ENCODE measurements at regions of chr21 and their contacts with region 1.

Region 1: DNA sequence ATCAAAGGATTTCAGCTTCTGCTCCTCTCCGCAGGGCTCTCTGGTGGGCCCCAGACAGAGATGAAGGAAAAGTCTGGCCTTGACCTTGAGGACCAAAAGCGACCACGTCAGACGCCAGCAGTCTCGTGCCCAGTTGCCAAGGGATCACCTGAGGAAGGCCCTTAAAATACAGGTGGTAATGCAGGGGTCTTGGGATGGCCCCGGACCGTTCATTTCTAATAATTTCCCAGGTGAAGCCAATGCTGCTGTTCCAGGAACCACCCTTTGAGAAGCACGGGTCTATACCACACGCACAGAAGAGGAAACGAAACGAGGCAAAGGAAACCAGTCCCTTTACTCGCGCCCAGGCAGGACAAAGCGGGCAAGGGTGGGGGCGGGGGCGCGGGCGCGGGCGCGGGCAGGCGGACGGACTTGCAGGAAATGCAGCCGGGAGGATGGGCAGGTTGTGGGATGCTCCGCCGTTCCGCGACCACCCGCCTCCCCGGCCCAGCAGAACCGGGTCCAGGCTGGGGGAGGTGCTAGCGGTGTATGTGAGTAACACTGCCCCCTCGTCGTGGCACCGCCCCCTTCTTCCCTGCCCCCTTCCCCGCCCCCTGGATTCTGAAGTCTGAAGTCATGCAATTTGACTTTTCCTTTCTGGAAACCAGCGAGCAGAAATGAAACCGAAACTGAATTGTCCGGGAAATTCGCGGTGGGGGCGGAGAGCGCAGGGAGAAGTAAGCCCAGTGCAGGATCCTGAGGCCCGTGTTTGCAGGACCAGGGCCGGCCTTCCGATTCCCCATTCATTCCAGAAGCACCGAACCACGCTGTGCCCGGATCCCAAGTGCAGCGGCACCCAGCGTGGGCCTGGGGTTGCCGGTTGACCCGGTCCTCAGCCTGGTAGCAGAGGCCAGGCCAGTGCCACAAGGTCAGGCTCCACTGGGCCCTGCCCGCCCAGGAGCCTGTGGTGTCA is 5.9 kb upstream of the MX1 start:
- DNase-seq: peak; percentile 95

Region 2: GRCh38 chr21:40752125-40752524 is 668.1 kb before region 1 on chr21:
- intact Hi-C with region 1: loop called in 1 of 2 experiments (anchors 10 kb)
- DNase-seq: no peak

Measured in posterior vena cava (tissue), 2 donors.